PC-3 (cell line): ENCODE measurements at regions of chr1 and their contacts with region 1.

Region 1: DNA sequence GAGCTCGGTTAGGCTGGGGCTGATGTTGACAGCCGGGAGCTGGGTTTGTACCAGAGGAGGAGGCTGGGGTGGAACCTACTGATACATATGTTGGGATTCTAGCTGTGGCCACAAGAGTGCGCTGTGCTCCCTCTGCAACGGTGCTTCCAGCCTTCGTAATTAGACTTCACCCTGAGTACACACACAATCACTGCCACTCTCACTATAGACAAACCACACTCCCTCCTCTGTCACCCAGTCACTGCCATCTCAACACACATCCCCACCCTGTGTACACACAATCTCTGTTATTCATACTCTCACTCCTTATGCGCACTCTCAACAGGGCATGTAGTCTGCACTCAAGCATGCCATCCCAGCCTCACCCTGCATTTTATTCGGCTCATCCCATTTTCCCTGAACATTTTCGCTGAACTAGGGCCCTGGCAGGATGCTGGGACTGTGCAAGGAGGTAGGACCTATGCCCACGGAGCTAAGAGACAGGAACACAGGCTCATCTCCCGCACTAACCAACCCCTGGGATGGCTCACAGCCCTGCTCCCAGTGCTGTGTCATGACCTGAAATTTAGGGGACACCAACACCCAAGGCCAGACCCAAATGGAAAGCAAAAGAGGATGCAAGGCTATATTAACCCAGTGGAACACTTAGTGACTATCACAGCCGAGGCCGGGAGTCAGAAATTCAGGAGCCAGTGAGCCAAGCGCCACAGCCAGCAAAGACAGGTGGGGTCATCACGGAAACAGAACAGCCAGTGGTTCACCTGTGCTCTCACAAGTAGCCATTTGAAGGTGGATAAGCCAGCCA is 5.7 kb downstream of the GJB3 start:
- DNase-seq: peak; percentile 87
- ATAC-seq: peak; percentile 76
- H3K4me3 ChIP-seq: no peak overlapping the region
- H3K27ac ChIP-seq: peak overlapping the region; percentile 80
- H3K4me1 ChIP-seq: peaks cover 53% of the 10 kb centered on the region
- H3K27me3 ChIP-seq: no peaks in the 10 kb centered on the region
- CTCF ChIP-seq: peak; percentile 85

Region 2: GRCh38 chr1:34753163-34753562 is 33.6 kb before region 1 on chr1:
- CTCF ChIA-PET with region 1: interaction called, 4 read pairs
- POLR2A ChIA-PET with region 1: no interaction called
- intact Hi-C with region 1: loop called (anchors 2 kb)
- DNase-seq: peak; percentile 81
- ATAC-seq: peak; percentile 74
- H3K4me3 ChIP-seq: no peak overlapping the region
- H3K27ac ChIP-seq: peak overlapping the region; percentile 91
- H3K4me1 ChIP-seq: peaks cover 34% of the 10 kb centered on the region
- H3K27me3 ChIP-seq: no peaks in the 10 kb centered on the region
- CTCF ChIP-seq: peak; percentile 63

Region 3: DNA sequence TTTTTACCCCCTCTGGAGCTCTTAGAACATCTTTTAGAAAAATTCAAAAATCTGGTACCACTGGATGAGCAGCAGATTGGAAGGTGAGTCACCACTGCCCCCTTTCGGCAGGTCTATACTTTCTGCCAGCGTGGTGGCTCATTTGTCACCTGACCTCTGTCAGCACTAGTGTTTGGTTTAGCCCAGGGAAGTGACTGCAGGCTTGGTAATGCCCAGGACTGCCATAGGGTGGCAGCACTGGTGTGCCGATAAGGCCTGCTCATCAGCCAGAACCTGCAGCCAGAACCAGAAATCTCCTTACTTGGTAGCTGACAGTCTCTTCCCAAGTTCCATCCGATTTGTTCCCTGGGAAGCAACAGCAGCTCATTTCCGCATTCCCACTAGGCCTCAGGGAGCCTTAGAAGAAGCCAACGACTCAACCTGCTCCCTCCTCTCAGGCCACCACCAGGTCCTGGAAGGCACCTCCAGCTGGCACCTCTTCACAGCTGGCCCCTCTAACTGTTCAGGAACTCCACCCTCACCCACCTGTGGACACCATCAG is 66.0 kb after region 1 on chr1:
- CTCF ChIA-PET with region 1: interaction called, 8 read pairs
- POLR2A ChIA-PET with region 1: no interaction called
- intact Hi-C with region 1: loop called (anchors 1 kb)
- DNase-seq: peak; percentile 97
- ATAC-seq: peak; percentile 96
- H3K4me3 ChIP-seq: no peak overlapping the region
- H3K27ac ChIP-seq: no peak overlapping the region
- H3K4me1 ChIP-seq: peaks cover 11% of the 10 kb centered on the region
- H3K27me3 ChIP-seq: no peaks in the 10 kb centered on the region
- CTCF ChIP-seq: peak; percentile 99

Region 4: DNA sequence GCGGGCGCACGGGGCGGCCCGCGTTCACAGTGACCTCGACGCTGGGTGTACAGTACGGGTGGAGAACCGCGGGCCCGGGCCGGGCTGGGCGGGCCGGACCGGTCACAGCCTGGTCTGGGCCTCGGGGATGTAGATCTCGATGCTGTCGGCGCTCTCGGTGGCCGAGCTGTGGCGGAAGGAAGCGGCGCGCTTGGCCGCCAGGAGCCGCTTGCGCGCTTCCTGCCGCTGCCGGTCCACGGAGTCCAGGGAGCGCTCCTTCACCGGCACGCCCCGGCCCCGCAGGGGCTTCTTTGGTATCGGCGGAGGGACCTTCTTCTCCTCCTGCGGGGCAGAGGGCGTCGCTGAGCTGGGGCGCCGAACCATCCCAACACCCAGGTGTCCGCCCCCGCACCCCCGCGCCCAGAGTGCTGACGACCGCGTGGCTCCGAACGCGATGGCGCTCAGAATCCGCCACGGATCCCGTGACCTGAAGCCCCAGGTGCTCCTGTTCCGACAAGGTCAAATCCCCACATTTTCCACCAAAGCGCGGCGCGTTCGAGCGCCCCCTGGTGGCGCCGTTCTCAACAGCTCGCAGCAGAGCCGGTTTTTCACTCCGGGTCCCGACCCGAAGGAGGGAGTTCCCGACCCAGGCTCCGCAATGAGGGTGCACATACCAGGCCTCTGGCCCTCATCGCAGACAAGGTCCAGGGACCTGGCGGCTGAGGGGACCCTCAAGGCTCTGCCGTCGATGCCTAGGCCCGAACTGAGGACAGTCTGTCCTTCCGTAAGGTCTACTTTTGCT is 79.4 kb after region 1 on chr1:
- CTCF ChIA-PET with region 1: no interaction called
- POLR2A ChIA-PET with region 1: no interaction called
- intact Hi-C with region 1: loop called (anchors 1 kb)
- DNase-seq: peak; percentile 77
- ATAC-seq: peak; percentile 75
- H3K4me3 ChIP-seq: peak overlapping the region; percentile 72
- H3K27ac ChIP-seq: no peak overlapping the region
- H3K4me1 ChIP-seq: peaks cover 3% of the 10 kb centered on the region; the same call in 1 of the 2 replicates
- H3K27me3 ChIP-seq: peaks cover 3% of the 10 kb centered on the region
- CTCF ChIP-seq: peak; percentile 95